ENCODE measurements at regions of chr3 and their contacts with region 1.

Region 1: DNA sequence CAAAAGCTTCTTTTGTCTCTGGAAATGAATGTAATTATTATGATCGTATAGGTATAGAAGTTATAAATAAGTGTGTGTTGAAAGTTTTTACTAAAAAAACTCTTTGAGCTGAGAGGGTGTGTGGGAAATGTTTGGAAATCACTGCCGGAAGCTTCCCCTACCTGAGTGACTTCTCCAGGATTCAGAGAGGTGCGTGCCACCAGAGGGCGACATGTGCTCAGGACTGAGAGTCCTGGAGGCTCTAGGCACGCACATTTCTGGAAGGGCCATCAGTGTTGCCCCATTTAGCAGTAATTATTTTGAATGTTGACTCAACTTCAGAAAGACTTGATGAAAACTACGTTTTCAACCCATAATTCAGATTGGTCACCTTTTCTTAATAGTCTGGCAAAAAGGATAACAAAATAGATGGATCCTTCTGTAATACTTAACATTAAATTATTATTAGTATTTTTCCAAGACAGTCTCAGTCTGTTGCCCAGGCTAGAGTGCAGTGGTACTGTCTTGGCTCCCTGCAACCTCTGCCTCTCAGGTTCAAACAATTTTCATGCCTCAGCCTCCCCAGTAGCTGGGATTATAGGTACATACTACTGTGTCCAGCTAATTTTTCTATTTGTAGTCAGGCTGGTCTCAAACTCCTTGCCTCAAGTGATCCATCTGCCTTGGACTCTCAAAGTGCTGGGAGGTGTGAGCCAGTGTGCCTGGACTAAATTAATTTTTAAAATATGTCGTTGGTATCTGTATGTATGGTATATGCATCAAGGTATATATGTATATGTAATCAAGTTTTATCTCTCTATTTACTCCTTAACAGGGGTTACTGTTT is 34.5 kb downstream of the GPR171 start:
- DNase-seq: peak; percentile 82
- H3K4me3 Mint-ChIP-seq: no peak overlapping the region
- H3K27ac Mint-ChIP-seq: no peak overlapping the region
- H3K4me1 Mint-ChIP-seq: no peaks in the 10 kb centered on the region
- H3K27me3 Mint-ChIP-seq: no peaks in the 10 kb centered on the region
- CTCF ChIP-seq: peak; percentile 88

Region 2: DNA sequence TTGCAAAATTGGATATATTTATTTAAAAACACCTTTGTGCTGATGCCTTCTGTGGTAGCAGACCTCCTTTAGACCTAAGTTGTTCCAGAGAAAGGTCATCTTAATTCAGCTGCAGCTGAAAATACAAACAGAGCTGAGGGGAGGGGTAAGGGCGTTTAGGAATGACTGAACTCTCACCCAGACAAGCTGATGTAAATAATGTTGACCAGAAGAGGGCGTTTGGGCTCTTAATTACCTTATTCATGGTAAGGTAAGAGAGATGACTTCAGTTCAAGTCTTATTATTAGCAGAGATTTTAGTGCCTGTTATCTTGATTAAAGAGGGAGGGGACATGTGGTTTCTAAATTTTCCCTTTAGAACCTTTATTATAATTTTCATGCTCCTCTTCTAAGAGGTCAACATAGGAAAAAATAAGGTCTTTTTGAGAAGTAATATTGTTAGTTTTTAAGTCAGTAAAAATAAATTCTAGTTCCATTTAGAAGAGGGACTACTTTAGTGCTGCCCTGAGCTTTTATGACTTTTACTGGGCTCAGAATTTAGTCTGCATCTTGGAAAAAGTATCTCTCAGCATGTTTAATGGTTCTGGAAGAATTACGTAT is 11.8 kb before region 1 on chr3:
- CTCF ChIA-PET with region 1: interaction called, 17 read pairs
- POLR2A ChIA-PET with region 1: no interaction called
- intact Hi-C with region 1: no loop called
- DNase-seq: peak; percentile 75
- H3K4me3 Mint-ChIP-seq: no peak overlapping the region
- H3K27ac Mint-ChIP-seq: no peak overlapping the region
- H3K4me1 Mint-ChIP-seq: no peaks in the 10 kb centered on the region
- H3K27me3 Mint-ChIP-seq: no peaks in the 10 kb centered on the region
- CTCF ChIP-seq: peak; percentile 52

Region 3: GRCh38 chr3:151191095-151191494 is 22.6 kb after region 1 on chr3:
- CTCF ChIA-PET with region 1: interaction called, 15 read pairs
- POLR2A ChIA-PET with region 1: no interaction called
- intact Hi-C with region 1: no loop called
- DNase-seq: no peak
- H3K4me3 Mint-ChIP-seq: no peak overlapping the region
- H3K27ac Mint-ChIP-seq: no peak overlapping the region
- H3K4me1 Mint-ChIP-seq: no peaks in the 10 kb centered on the region
- H3K27me3 Mint-ChIP-seq: no peaks in the 10 kb centered on the region
- CTCF ChIP-seq: no peak

Region 4: DNA sequence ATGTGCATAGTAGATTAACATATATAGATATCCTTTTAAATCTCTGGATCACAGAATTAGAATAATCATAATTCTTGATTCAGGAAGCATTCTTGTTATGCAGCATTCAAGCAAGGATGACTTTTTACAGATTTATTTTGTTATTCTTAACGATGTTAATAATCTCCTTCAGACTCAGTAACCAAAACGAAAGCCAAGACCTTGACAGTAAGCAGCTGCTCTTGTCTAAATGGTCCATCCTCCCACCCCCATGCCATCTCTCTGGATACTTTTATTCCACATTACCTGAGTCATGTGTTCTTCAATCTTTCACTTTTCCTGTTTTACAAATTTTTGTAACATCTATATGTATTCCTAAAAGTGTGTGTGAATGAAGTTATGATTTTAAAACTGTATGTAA is 67.8 kb after region 1 on chr3:
- CTCF ChIA-PET with region 1: interaction called, 43 read pairs
- POLR2A ChIA-PET with region 1: no interaction called
- intact Hi-C with region 1: no loop called
- DNase-seq: no peak
- H3K4me3 Mint-ChIP-seq: no peak overlapping the region
- H3K27ac Mint-ChIP-seq: no peak overlapping the region
- H3K4me1 Mint-ChIP-seq: no peaks in the 10 kb centered on the region
- H3K27me3 Mint-ChIP-seq: no peaks in the 10 kb centered on the region
- CTCF ChIP-seq: no peak

Region 5: GRCh38 chr3:151282921-151283320 is 114.4 kb after region 1 on chr3:
- CTCF ChIA-PET with region 1: interaction called, 94 read pairs
- POLR2A ChIA-PET with region 1: interaction called, 6 read pairs
- intact Hi-C with region 1: loop called (anchors 1 kb)
- DNase-seq: peak; percentile 73
- H3K4me3 Mint-ChIP-seq: no peak overlapping the region
- H3K27ac Mint-ChIP-seq: no peak overlapping the region
- H3K4me1 Mint-ChIP-seq: no peaks in the 10 kb centered on the region
- H3K27me3 Mint-ChIP-seq: no peaks in the 10 kb centered on the region
- CTCF ChIP-seq: peak; percentile 67

Region 6: DNA sequence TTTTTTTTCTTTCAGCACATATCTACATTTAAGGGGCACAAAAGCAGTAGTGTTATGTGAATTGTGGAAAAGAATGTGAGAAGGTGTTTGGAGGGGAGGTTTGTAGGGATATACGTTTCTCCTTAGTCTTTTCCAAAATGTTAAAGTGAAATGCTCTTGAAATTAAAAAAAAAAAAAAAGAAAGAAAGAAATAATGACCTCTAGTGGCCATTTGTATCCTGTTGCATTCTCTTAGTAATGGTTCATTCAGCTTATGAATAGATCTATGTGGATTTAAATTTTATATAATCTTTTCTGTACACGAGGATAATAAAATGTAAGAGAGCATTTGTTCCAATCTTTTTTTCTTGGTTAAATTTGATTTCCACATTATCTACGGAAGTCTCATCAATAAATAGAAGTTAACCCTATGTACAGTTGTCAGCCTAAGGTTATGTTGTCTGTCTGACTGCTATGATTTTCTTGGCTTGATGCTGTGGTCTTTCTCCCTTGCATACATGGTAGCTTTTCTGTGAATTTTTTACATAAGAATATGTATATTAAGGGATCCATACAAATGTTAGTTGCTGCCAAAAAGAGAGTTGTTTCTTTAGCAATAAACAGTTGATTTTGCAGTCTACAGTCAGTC is 159.2 kb after region 1 on chr3:
- CTCF ChIA-PET with region 1: interaction called, 13 read pairs
- POLR2A ChIA-PET with region 1: no interaction called
- intact Hi-C with region 1: no loop called
- DNase-seq: peak; percentile 36
- H3K4me3 Mint-ChIP-seq: no peak overlapping the region
- H3K27ac Mint-ChIP-seq: no peak overlapping the region
- H3K4me1 Mint-ChIP-seq: peaks cover 8% of the 10 kb centered on the region
- H3K27me3 Mint-ChIP-seq: no peaks in the 10 kb centered on the region
- CTCF ChIP-seq: peak; percentile 52

Region 7: DNA sequence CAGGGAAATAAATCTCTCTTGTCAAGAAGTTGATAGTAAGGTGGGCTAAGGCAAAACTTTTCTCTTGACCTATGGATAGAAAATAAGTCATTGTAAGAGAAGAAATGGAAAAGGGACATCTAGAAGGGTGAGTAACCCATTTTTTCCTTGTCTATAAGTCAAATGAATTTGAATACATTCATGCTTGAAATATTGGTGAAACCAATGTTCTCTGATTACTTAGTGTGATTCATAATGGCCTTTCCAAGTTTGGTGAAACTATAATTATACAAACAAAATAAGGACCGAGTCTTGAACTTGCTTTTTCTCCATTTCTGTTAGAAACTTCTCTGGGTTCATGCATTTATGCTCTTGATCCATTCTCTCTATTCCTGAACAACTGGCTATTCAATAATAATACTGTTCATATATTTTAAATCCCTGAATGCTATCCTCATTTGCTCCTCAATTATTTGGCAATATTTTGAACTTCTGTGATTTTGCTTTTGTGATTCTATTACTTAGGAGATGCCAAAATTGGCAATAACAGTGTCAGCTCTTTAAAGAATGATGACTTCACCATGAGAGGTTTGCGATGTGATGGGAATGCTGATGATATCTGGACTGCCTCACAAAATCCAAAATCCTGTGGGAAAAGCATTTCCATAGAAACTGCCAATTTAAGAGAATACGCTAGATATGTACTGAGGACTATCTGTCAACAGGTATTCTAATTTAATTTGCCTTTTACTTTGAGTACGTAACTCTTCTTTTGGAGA is 203.8 kb after region 1 on chr3:
- CTCF ChIA-PET with region 1: no interaction called
- POLR2A ChIA-PET with region 1: no interaction called
- intact Hi-C with region 1: no loop called
- DNase-seq: no peak
- H3K4me3 Mint-ChIP-seq: no peak overlapping the region
- H3K27ac Mint-ChIP-seq: no peak overlapping the region
- H3K4me1 Mint-ChIP-seq: no peaks in the 10 kb centered on the region
- H3K27me3 Mint-ChIP-seq: no peaks in the 10 kb centered on the region
- CTCF ChIP-seq: no peak

Region 8: GRCh38 chr3:151918253-151919029 is 750.0 kb after region 1 on chr3:
- CTCF ChIA-PET with region 1: interaction called, 5 read pairs
- POLR2A ChIA-PET with region 1: no interaction called
- intact Hi-C with region 1: loop called (anchors 5 kb)
- DNase-seq: peak; percentile 50
- H3K4me3 Mint-ChIP-seq: no peak overlapping the region
- H3K27ac Mint-ChIP-seq: no peak overlapping the region
- H3K4me1 Mint-ChIP-seq: no peaks in the 10 kb centered on the region
- H3K27me3 Mint-ChIP-seq: no peaks in the 10 kb centered on the region
- CTCF ChIP-seq: peak; percentile 70

Measured in MCF 10A (cell line).